Endothelial cell of umbilical vein (primary cell): ENCODE measurements at regions of chr2 and their contacts with region 1.

Region 1: GRCh38 chr2:222690564-222691200 is 19.2 kb downstream of the MOGAT1 start:
- DNase-seq: peak; percentile 62
- H3K4me3 ChIP-seq: no peak overlapping the region
- H3K27ac ChIP-seq: no peak overlapping the region
- H3K4me1 ChIP-seq: peaks cover 21% of the 10 kb centered on the region
- H3K27me3 ChIP-seq: no peaks in the 10 kb centered on the region
- CTCF ChIP-seq: peak; percentile 99 to 100
- POLR2A ChIP-seq: no peak

Region 2: DNA sequence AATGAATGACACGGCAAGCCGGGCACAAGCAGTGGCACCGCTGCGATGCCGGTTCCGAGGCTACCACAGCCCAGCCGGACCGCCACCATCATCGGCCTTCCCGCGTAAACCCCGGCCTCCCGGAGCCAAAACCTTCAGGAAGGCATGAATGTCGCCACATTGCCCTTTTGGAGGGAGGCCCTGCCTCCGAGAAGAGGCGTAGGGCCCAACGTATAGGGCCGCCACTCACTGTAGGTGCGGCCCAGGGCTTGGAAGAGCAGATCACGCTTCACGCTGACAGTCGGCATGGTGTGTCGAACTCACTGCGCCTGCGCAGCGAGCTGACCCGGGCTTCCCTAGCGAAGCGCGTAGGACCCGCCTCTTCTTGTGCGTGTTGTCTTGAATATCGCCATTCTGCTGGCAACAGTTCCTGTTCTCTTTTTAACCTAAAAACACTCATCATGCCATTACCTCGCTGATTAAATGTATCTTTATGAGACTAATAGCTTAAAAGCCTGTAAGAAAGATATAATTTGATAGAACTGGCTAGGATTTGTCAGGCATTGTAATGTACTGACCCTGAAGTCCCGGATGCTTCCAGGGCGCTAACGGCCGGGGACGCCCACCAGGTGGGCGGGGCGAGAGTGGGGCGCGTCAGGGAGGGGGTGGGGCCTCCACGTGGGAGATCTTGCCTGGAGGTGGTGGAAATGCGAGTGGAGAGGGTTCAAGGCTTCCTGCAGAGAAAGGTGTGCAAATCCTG is 34.7 kb before region 1 on chr2 and contains the start of gene FARSB:
- CTCF ChIA-PET with region 1: interaction called, 11 read pairs
- POLR2A ChIA-PET with region 1: no interaction called
- dilution Hi-C with region 1: no loop called
- intact Hi-C with region 1: loop called (anchors 2 kb)
- DNase-seq: peak; percentile 97
- H3K4me3 ChIP-seq: peak within 1 kb of the TSS; percentile 47 to 95 (median 92)
- H3K27ac ChIP-seq: peak within 1 kb of the TSS; percentile 99
- H3K4me1 ChIP-seq: peaks cover 34% of the 10 kb centered on the region
- H3K27me3 ChIP-seq: no peaks in the 10 kb centered on the region
- CTCF ChIP-seq: no peak
- POLR2A ChIP-seq: peak; percentile 64
- total RNA-seq, gene FARSB: 27.2 and 29.4 TPM in 2 replicates

Region 3: GRCh38 chr2:222792001-222792611 is 101.4 kb after region 1 on chr2:
- CTCF ChIA-PET with region 1: interaction called, 11 read pairs
- POLR2A ChIA-PET with region 1: no interaction called
- dilution Hi-C with region 1: no loop called
- intact Hi-C with region 1: loop called (anchors 2 kb)
- DNase-seq: peak; percentile 64
- H3K4me3 ChIP-seq: no peak overlapping the region
- H3K27ac ChIP-seq: no peak overlapping the region
- H3K4me1 ChIP-seq: peaks cover 11% of the 10 kb centered on the region
- H3K27me3 ChIP-seq: no peaks in the 10 kb centered on the region
- CTCF ChIP-seq: no peak
- POLR2A ChIP-seq: no peak

Region 4: DNA sequence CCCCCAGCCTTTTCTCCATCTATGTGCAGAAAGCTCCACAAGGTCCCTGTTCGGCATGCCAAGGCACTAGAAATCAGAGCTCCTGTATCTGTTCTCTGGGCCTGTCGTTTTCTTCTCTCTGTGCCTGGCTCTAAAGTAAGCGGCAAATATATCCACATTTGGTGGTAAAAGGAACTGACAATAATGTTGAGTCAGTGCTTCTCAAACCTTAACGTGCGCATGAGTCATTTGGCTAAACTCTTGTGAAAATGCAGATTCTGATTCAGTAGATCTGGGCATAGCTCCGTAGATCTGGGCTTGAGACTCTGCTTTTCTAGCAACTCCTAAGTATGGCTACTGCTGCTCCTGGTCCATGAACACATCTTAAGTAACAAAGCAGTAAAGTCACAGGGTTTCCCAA is 153.6 kb after region 1 on chr2:
- CTCF ChIA-PET with region 1: interaction called, 11 read pairs
- POLR2A ChIA-PET with region 1: no interaction called
- dilution Hi-C with region 1: no loop called
- intact Hi-C with region 1: no loop called
- DNase-seq: peak; percentile 55
- H3K4me3 ChIP-seq: no peak overlapping the region
- H3K27ac ChIP-seq: no peak overlapping the region
- H3K4me1 ChIP-seq: peaks cover 22% of the 10 kb centered on the region
- H3K27me3 ChIP-seq: no peaks in the 10 kb centered on the region
- CTCF ChIP-seq: no peak
- POLR2A ChIP-seq: no peak

Region 5: GRCh38 chr2:222903234-222904220 is 212.8 kb after region 1 on chr2:
- CTCF ChIA-PET with region 1: interaction called, 60 read pairs
- POLR2A ChIA-PET with region 1: no interaction called
- dilution Hi-C with region 1: no loop called
- intact Hi-C with region 1: loop called (anchors 1 kb)
- DNase-seq: peak; percentile 71
- H3K4me3 ChIP-seq: no peak overlapping the region
- H3K27ac ChIP-seq: no peak overlapping the region
- H3K4me1 ChIP-seq: peaks cover 6% of the 10 kb centered on the region
- H3K27me3 ChIP-seq: no peaks in the 10 kb centered on the region
- CTCF ChIP-seq: peak; percentile 42 to 44
- POLR2A ChIP-seq: no peak

Region 6: DNA sequence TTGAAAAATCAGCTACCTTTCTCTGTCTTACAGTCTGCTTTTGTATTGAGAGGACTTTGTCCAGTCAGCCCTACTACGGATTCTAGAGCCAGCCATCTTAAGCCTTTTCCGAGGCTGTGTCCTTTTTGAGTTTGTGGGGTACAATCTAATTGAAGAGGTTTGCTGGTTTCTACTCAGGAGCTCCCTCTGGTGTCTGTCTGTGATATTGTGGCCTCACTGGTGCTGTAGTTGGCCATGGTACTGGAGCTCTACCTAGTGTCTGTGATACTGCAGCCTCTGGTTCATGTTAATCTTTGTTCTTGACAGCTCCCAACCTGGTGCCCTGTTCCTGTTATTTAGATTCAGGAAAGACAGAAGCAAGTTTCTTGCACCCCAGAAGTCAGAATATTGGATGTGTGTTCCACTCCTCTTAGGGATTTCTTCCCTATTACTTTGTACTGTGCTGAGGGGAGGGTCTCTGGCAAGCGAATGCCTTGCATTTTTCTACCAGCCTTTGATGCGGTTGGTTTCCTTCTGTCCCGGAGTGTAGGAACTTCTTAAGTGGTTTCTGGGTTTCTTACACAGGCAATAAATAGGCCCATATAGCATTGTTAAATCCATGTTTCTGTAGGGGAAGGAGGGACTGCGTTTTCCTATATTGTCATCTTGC is 248.7 kb after region 1 on chr2:
- CTCF ChIA-PET with region 1: interaction called, 48 read pairs
- POLR2A ChIA-PET with region 1: no interaction called
- dilution Hi-C with region 1: no loop called
- intact Hi-C with region 1: loop called (anchors 1 kb)
- DNase-seq: peak; percentile 75
- H3K4me3 ChIP-seq: no peak overlapping the region
- H3K27ac ChIP-seq: no peak overlapping the region
- H3K4me1 ChIP-seq: no peaks in the 10 kb centered on the region
- H3K27me3 ChIP-seq: no peaks in the 10 kb centered on the region
- CTCF ChIP-seq: peak; percentile 85 to 87
- POLR2A ChIP-seq: no peak